ENCODE measurements at regions of chrX and their contacts with region 1.

Region 1: DNA sequence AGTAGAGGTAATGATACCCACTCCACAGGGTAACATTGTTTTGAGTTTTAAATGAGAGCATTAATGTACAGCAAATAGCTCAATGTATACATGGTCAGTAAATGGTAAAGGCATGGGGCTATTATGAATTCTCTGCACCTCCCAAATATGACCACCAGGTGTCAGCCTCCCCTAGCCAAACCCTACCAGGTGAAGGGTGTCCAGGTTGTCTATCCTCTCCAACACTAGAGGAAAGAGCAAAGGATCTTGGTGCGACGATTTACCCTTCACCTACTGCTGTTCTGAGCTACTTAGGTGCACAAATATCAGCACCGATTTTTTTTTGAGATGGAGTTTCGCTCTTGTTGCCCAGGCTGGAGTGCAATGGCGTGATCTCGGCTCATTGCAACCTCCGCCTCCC is 26.5 kb upstream of the XIAP start:
- DNase-seq: peak; percentile 18 to 61 (median 52)
- ATAC-seq: peak; percentile 95
- H3K4me3 ChIP-seq: no peak overlapping the region
- H3K4me3 Mint-ChIP-seq: no peak overlapping the region
- H3K27ac ChIP-seq: no peak overlapping the region
- H3K27ac Mint-ChIP-seq: no peak overlapping the region
- H3K4me1 ChIP-seq: no peaks in the 10 kb centered on the region
- H3K4me1 Mint-ChIP-seq: no peaks in the 10 kb centered on the region
- H3K27me3 ChIP-seq: no peaks in the 10 kb centered on the region
- H3K27me3 Mint-ChIP-seq: peaks cover 0 to 5% (median 0%) of the 10 kb centered on the region in 5 donors

Region 2: DNA sequence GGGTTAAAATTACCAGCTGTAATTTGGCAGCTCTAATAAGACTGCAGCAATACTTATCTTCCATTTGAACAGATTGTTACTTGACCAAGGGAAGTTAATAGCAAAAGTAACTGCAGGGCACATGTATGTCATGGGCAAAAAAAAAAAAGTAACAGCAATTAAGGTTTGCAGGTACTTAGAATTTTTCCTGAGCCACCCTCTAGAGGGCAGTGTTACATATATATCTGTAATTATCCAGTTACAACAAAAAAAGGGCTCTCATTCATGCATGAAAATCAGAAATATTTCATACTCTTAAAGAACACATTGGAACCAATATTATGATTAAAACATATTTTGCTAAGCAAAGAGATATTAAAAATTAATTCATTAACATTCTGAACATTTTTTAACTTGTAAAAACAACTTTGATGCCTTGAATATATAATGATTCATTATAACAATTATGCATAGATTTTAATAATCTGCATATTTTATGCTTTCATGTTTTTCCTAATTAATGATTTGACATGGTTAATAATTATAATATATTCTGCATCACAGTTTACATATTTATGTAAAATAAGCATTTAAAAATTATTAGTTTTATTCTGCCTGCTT is 51.5 kb after region 1 on chrX:
- CTCF ChIA-PET with region 1: interaction called, 4 read pairs
- POLR2A ChIA-PET with region 1: no interaction called
- intact Hi-C with region 1: loop called (anchors 1 to 2 kb)
- DNase-seq: peak in 7 of 9 donors; percentile 16 to 55 (median 45)
- ATAC-seq: peak; percentile 77
- H3K4me3 ChIP-seq: no peak overlapping the region
- H3K4me3 Mint-ChIP-seq: no peak overlapping the region
- H3K27ac ChIP-seq: no peak overlapping the region
- H3K27ac Mint-ChIP-seq: no peak overlapping the region
- H3K4me1 ChIP-seq: no peaks in the 10 kb centered on the region
- H3K4me1 Mint-ChIP-seq: peaks cover 6 to 14% (median 10%) of the 10 kb centered on the region in 7 donors
- H3K27me3 ChIP-seq: no peaks in the 10 kb centered on the region
- H3K27me3 Mint-ChIP-seq: no peaks in the 10 kb centered on the region

Region 3: GRCh38 chrX:123976706-123977316 is 143.4 kb after region 1 on chrX:
- CTCF ChIA-PET with region 1: no interaction called
- POLR2A ChIA-PET with region 1: no interaction called
- intact Hi-C with region 1: loop called in 1 of 2 experiments (anchors 1 kb)
- DNase-seq: peak in 4 of 9 donors; percentile 9 to 28 (median 22)
- ATAC-seq: peak; percentile 57
- H3K4me3 ChIP-seq: no peak overlapping the region
- H3K4me3 Mint-ChIP-seq: peak overlapping the region in 7 of 10 donors; percentile 30 to 64 (median 53)
- H3K27ac ChIP-seq: no peak overlapping the region
- H3K27ac Mint-ChIP-seq: peak overlapping the region in 6 of 9 donors; percentile 4 to 66 (median 32)
- H3K4me1 ChIP-seq: peaks cover 5 to 12% of the 10 kb centered on the region in 2 donors
- H3K4me1 Mint-ChIP-seq: peaks cover 24 to 70% (median 58%) of the 10 kb centered on the region in 7 donors
- H3K27me3 ChIP-seq: no peaks in the 10 kb centered on the region
- H3K27me3 Mint-ChIP-seq: no peaks in the 10 kb centered on the region

Region 4: GRCh38 chrX:124018023-124018422 is 184.6 kb after region 1 on chrX:
- CTCF ChIA-PET with region 1: no interaction called
- POLR2A ChIA-PET with region 1: no interaction called
- intact Hi-C with region 1: loop called in 1 of 2 experiments (anchors 2 kb)
- DNase-seq: peak in 7 of 9 donors; percentile 3 to 40 (median 10)
- ATAC-seq: peak; percentile 59
- H3K4me3 ChIP-seq: no peak overlapping the region
- H3K4me3 Mint-ChIP-seq: peak overlapping the region in 5 of 10 donors; percentile 23 to 49 (median 36)
- H3K27ac ChIP-seq: no peak overlapping the region
- H3K27ac Mint-ChIP-seq: peak overlapping the region in 8 of 9 donors; percentile 43 to 75 (median 62)
- H3K4me1 ChIP-seq: peaks cover 0 to 7% of the 10 kb centered on the region in 2 donors
- H3K4me1 Mint-ChIP-seq: peaks cover 6 to 67% (median 44%) of the 10 kb centered on the region in 7 donors
- H3K27me3 ChIP-seq: no peaks in the 10 kb centered on the region
- H3K27me3 Mint-ChIP-seq: no peaks in the 10 kb centered on the region

Region 5: GRCh38 chrX:124045109-124045508 is 211.7 kb after region 1 on chrX:
- CTCF ChIA-PET with region 1: no interaction called
- POLR2A ChIA-PET with region 1: no interaction called
- intact Hi-C with region 1: loop called in 1 of 2 experiments (anchors 5 kb)
- DNase-seq: no peak
- ATAC-seq: no peak
- H3K4me3 ChIP-seq: no peak overlapping the region
- H3K4me3 Mint-ChIP-seq: no peak overlapping the region
- H3K27ac ChIP-seq: no peak overlapping the region
- H3K27ac Mint-ChIP-seq: peak overlapping the region in 3 of 9 donors; percentile 3 to 63 (median 62)
- H3K4me1 ChIP-seq: peaks cover 0 to 3% of the 10 kb centered on the region in 2 donors
- H3K4me1 Mint-ChIP-seq: peaks cover 0 to 33% (median 15%) of the 10 kb centered on the region in 7 donors
- H3K27me3 ChIP-seq: no peaks in the 10 kb centered on the region
- H3K27me3 Mint-ChIP-seq: no peaks in the 10 kb centered on the region

Region 6: DNA sequence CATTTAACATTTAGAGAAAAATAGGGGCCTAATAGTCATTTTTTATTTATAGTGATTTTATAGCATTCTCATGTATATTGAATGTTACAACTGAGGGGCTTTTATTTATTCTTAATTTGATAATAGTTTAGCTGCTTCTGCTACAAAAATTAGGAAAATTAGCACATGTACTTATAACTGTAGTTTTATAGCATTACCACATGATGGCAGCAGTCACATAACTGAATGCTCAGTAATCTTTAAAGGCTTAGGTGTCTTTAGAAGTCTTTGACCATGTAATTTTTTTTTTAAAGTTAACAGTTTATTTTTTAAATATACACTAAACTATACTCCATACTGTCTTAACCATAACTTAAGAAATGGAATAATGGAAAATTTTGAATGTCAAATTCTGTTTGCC is 264.7 kb after region 1 on chrX:
- CTCF ChIA-PET with region 1: no interaction called
- POLR2A ChIA-PET with region 1: no interaction called
- intact Hi-C with region 1: loop called in 1 of 2 experiments (anchors 5 kb)
- DNase-seq: peak in 5 of 9 donors; percentile 8 to 34 (median 30)
- ATAC-seq: peak; percentile 55
- H3K4me3 ChIP-seq: no peak overlapping the region
- H3K4me3 Mint-ChIP-seq: no peak overlapping the region
- H3K27ac ChIP-seq: no peak overlapping the region
- H3K27ac Mint-ChIP-seq: no peak overlapping the region
- H3K4me1 ChIP-seq: no peaks in the 10 kb centered on the region
- H3K4me1 Mint-ChIP-seq: peaks cover 0 to 2% (median 0%) of the 10 kb centered on the region in 7 donors
- H3K27me3 ChIP-seq: no peaks in the 10 kb centered on the region
- H3K27me3 Mint-ChIP-seq: no peaks in the 10 kb centered on the region

Region 7: DNA sequence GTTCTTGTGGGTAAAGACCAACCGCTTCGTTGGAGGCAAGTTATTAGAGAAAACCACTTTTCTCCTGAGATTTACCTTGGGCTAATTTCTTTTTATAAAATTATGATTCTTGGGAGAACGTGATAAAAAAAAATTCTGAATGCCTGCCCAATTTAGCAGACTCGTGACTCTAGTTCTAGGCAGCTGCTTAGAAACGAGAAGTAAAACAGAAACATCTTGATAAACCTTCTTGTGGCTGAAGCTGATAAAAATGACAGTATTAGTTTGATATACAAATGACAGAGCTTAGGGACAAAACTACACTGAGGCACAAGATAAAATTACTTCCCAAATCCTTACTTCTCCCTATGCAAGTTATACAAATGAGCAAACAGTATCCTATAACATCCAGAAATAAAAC is 1027.3 kb after region 1 on chrX:
- CTCF ChIA-PET with region 1: no interaction called
- POLR2A ChIA-PET with region 1: no interaction called
- intact Hi-C with region 1: no loop called
- DNase-seq: no peak
- ATAC-seq: no peak
- H3K4me3 ChIP-seq: no peak overlapping the region
- H3K4me3 Mint-ChIP-seq: no peak overlapping the region
- H3K27ac ChIP-seq: no peak overlapping the region
- H3K27ac Mint-ChIP-seq: no peak overlapping the region
- H3K4me1 ChIP-seq: no peaks in the 10 kb centered on the region
- H3K4me1 Mint-ChIP-seq: no peaks in the 10 kb centered on the region
- H3K27me3 ChIP-seq: no peaks in the 10 kb centered on the region
- H3K27me3 Mint-ChIP-seq: peaks cover 0 to 16% (median 0%) of the 10 kb centered on the region in 5 donors

Measured in naive thymus-derived CD4-positive, alpha-beta T cell (primary cell).